ENCODE measurements at regions of chr11 and their contacts with region 1.

Region 1: DNA sequence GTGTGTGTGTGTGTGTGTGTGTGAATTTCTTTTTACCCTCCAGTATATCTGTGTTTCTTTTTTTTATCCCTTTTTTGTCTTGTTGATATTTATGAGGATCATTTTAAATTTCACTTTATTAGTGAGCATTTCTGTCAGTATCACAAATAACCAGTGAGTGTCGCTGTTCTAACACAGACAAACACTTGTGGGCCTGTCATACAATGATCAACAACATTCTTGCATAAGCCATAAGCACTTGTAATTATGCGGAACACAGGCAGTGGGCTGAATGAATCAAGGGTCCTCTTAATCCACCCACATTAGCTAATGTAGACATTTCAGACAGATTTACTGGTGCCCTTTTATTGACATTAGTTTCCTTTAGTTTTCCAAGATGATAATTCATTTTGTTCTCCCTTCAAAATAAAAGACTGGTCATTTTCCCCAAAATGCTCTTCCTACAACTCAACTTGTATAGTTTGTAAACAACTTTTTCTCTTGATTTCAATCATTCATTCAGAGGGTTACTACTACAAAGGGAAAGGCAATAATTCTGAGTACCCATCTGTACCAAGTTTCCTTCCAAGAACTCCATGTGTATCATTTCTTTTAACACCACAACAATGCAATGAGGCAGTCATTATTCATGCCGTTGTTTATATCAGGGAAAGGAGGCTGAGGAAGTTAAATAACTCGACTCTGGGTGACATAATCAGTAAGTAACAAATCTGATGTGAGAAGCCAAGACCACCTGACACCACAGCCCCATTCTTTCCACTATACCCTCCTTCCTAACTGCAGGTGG is 34.5 kb upstream of the ANO3 start:
- DNase-seq: no peak
- ATAC-seq: peak; percentile 67

Region 2: GRCh38 chr11:26227296-26227695 is 70.1 kb before region 1 on chr11:
- intact Hi-C with region 1: no loop called
- DNase-seq: no peak
- ATAC-seq: no peak

Region 3: DNA sequence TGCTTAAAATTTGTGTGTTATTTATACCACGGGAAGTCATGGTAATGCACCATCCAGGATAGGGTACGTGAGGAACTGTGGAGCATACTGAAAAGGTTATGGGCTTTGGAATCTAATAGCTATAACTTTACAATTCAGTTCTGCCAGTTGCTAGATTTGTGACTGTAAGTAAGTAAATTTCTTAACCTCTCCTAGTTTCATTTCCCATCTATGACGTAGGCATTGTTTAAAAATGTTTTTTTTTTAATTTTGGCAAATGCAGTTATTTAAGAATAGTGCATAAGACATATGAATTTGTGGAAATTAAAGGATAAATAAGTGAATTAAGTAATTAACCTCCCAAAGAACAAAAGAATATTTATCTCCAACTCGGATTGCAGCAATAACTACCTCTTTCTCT is 126.4 kb after region 1 on chr11:
- intact Hi-C with region 1: no loop called
- DNase-seq: no peak
- ATAC-seq: no peak

Region 4: DNA sequence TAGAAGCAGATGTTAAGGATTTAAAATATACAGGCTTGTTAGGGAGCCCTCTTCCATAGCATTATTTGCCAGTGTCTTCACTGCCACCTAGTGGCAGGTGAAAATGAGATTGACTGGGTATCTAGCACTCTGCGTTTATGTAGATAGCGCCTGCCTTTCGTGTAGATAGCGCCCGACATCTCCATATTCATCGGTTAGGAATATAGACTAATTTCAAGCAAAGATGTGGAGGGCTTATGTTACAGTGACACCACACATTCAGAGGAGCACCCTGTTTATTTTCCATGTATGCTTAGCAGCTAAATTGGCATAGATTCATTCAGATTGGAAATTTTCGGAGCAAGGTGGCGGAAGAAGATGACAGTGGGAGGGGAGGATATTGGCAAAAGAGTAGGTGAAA is 352.5 kb after region 1 on chr11:
- intact Hi-C with region 1: loop called in 1 of 2 experiments (anchors 10 kb)
- DNase-seq: peak; percentile 56 to 68
- ATAC-seq: peak; percentile 88